ENCODE measurements at regions of chr2 and their contacts with region 1.

Region 1: DNA sequence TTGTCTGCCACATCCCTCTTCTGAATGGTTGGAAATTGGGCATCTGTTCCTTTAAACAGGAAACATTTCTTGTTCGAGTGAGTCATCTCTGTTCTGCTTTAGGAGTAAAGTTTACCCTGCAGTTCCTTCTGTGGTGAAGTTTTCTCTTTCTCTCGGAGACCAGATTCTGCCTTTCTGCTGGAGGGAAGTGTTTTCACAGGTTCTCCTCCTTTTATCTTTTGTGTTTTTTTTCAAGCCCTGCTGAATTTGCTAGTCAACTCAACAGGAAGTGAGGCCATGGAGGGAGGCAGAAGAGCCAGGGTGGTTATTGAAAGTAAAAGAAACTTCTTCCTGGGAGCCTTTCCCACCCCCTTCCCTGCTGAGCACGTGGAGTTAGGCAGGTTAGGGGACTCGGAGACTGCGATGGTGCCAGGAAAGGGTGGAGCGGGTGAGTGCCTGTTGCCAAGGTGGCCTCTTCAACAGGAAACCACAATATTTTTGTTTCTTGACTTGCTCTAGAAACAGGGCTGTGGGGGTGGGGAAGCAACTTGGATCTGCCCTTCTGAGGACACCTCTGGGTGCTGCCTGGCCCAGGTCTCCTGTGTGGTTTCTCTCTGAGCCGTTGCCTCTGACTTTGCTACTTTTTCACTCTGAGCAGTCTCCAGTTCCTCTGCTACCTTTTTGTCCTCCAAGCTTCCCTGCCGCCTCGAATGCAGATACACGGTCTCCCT is 2.2 kb upstream of the CASP8 start:
- DNase-seq: peak; percentile 94
- ATAC-seq: peak; percentile 67
- H3K4me3 ChIP-seq: peak overlapping the region; percentile 39 to 90 (median 58)
- H3K4me3 Mint-ChIP-seq: peak overlapping the region; percentile 87
- H3K27ac ChIP-seq: peak overlapping the region; percentile 97 to 98
- H3K27ac Mint-ChIP-seq: peak overlapping the region; percentile 99
- H3K4me1 ChIP-seq: peaks cover 58 to 84% of the 10 kb centered on the region in 2 donors
- H3K4me1 Mint-ChIP-seq: peaks cover 73% of the 10 kb centered on the region
- H3K27me3 ChIP-seq: no peaks in the 10 kb centered on the region
- H3K27me3 Mint-ChIP-seq: no peaks in the 10 kb centered on the region
- CTCF ChIP-seq: no peak

Region 2: DNA sequence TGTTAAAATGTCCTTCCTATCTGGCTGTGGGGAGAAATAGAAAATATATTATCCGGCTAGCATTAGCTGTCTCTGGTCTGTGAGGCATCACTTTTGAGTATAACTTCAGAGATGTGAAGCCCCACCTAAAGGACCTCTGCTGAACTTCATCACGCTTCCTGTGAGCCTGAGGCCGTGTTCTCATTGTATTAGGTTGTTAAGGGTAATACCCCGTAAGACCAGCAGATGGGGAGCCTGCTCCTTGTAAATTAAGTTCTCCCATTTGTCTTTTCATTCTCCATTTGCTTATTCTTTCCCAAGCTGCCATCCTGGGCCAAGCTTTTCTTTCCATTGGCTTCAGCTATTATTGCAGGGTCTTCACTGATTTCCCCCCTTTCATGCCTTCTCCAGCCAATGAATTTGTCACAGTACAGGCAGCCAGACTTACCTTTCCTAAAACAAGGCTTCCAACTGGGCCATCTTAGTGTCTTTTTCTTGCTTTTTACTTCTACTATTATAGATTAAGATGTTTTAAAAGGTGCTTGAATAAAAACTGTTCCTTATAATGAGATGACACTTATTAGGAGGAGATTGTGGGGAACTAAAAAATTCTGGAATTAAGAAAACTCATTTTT is 356.5 kb before region 1 on chr2:
- CTCF ChIA-PET with region 1: no interaction called
- POLR2A ChIA-PET with region 1: no interaction called
- intact Hi-C with region 1: loop called (anchors 1 kb)
- DNase-seq: peak; percentile 86
- ATAC-seq: peak; percentile 100
- H3K4me3 ChIP-seq: no peak overlapping the region
- H3K4me3 Mint-ChIP-seq: no peak overlapping the region
- H3K27ac ChIP-seq: peak overlapping the region in 1 of 2 donors; percentile 40
- H3K27ac Mint-ChIP-seq: no peak overlapping the region
- H3K4me1 ChIP-seq: no peaks in the 10 kb centered on the region
- H3K4me1 Mint-ChIP-seq: peaks cover 4% of the 10 kb centered on the region
- H3K27me3 ChIP-seq: no peaks in the 10 kb centered on the region
- H3K27me3 Mint-ChIP-seq: no peaks in the 10 kb centered on the region
- CTCF ChIP-seq: peak; percentile 94

Region 3: DNA sequence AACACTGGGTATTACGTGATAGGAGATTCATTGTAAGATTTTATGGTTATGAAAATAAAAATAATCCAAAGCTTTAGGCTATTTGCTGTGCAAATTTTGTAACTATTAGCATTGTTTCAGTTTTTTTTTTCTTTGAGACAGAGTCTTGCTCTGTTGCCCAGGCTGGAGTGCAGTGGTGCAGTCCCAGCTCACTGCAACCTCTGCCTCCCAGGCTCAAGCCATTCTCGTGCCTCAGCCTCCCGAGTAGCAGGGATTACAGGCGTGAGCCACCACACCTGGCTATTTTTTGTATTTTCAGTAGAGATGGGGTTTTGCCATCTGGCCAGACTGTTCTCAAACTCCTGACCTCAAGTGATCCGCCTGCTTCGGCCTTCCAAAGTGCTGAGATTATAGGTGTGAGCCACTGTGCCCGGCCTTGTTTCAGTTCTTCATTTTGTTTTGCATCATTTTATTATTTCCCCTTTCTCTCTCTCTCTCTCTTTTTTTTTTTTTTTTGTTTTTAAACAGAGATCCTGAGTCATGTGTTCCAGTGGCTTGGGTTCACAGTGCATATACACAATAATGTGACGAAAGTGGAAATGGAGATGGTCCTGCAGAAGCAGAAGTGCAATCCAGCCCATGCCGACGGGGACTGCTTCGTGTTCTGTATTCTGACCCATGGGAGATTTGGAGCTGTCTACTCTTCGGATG is 49.4 kb before region 1 on chr2:
- CTCF ChIA-PET with region 1: no interaction called
- POLR2A ChIA-PET with region 1: interaction called, 5 read pairs
- intact Hi-C with region 1: loop called (anchors 2 kb)
- DNase-seq: peak; percentile 90
- ATAC-seq: peak; percentile 85
- H3K4me3 ChIP-seq: peak overlapping the region in 3 of 5 experiments; percentile 8 to 40 (median 31)
- H3K4me3 Mint-ChIP-seq: peak overlapping the region; percentile 68
- H3K27ac ChIP-seq: peak overlapping the region; percentile 60 to 76
- H3K27ac Mint-ChIP-seq: peak overlapping the region; percentile 94
- H3K4me1 ChIP-seq: peaks cover 34 to 42% of the 10 kb centered on the region in 2 donors
- H3K4me1 Mint-ChIP-seq: peaks cover 58% of the 10 kb centered on the region
- H3K27me3 ChIP-seq: no peaks in the 10 kb centered on the region
- H3K27me3 Mint-ChIP-seq: no peaks in the 10 kb centered on the region
- CTCF ChIP-seq: no peak

Region 4: GRCh38 chr2:201242571-201243277 is 15.4 kb before region 1 on chr2:
- CTCF ChIA-PET with region 1: interaction called, 65 read pairs
- POLR2A ChIA-PET with region 1: interaction called, 6 read pairs
- intact Hi-C with region 1: loop called (anchors 1 kb)
- DNase-seq: no peak
- ATAC-seq: no peak
- H3K4me3 ChIP-seq: peak overlapping the region in 1 of 5 experiments; percentile 33
- H3K4me3 Mint-ChIP-seq: peak overlapping the region; percentile 14
- H3K27ac ChIP-seq: peak overlapping the region; percentile 27 to 42
- H3K27ac Mint-ChIP-seq: peak overlapping the region; percentile 46
- H3K4me1 ChIP-seq: peaks cover 47 to 48% of the 10 kb centered on the region in 2 donors
- H3K4me1 Mint-ChIP-seq: peaks cover 74% of the 10 kb centered on the region
- H3K27me3 ChIP-seq: no peaks in the 10 kb centered on the region
- H3K27me3 Mint-ChIP-seq: no peaks in the 10 kb centered on the region
- CTCF ChIP-seq: no peak

Region 5: GRCh38 chr2:201275990-201276389 is 17.9 kb after region 1 on chr2:
- CTCF ChIA-PET with region 1: interaction called, 9 read pairs
- POLR2A ChIA-PET with region 1: no interaction called
- intact Hi-C with region 1: loop called (anchors 2 kb)
- DNase-seq: no peak
- ATAC-seq: no peak
- H3K4me3 ChIP-seq: no peak overlapping the region
- H3K4me3 Mint-ChIP-seq: no peak overlapping the region
- H3K27ac ChIP-seq: no peak overlapping the region
- H3K27ac Mint-ChIP-seq: peak overlapping the region; percentile 53
- H3K4me1 ChIP-seq: peaks cover 10 to 18% of the 10 kb centered on the region in 2 donors
- H3K4me1 Mint-ChIP-seq: peaks cover 27% of the 10 kb centered on the region
- H3K27me3 ChIP-seq: no peaks in the 10 kb centered on the region
- H3K27me3 Mint-ChIP-seq: no peaks in the 10 kb centered on the region
- CTCF ChIP-seq: no peak

Region 6: DNA sequence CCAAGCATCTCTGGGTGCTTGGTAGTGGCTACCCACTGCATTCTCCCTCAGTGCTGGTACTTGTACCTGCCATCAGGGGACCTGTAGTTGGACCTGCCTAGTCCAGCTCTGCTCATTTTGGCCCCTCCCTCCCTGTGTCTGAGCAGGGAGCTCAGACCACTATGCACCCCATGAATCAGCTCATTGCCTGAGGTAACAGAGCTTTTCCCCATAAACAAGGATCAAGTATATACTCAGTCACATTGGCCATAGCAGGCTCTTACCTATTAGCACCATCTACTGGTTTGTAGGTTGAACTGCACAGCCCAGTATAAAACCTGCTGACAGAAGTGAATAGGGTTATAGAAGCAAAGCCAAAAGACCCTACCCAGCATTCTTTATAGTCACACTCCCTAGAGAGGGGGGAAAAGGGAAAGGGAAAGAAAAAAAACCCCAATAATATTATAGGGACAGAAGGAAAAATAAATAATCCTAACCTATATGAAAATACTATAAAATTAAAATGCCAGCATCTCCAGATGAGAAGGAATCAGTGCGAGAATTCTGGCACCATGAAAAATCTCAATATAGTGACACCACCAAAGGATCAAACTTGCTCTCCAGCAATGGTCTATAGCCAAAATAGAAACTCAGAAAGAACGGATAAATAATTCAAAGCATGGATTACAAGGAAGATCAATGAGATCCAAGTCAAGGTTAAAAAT is 105.9 kb after region 1 on chr2:
- CTCF ChIA-PET with region 1: interaction called, 6 read pairs
- POLR2A ChIA-PET with region 1: no interaction called
- intact Hi-C with region 1: loop called (anchors 1 kb)
- DNase-seq: peak; percentile 69
- ATAC-seq: peak; percentile 97
- H3K4me3 ChIP-seq: no peak overlapping the region
- H3K4me3 Mint-ChIP-seq: no peak overlapping the region
- H3K27ac ChIP-seq: no peak overlapping the region
- H3K27ac Mint-ChIP-seq: no peak overlapping the region
- H3K4me1 ChIP-seq: peaks cover 0 to 3% of the 10 kb centered on the region in 2 donors
- H3K4me1 Mint-ChIP-seq: peaks cover 4% of the 10 kb centered on the region
- H3K27me3 ChIP-seq: no peaks in the 10 kb centered on the region
- H3K27me3 Mint-ChIP-seq: no peaks in the 10 kb centered on the region
- CTCF ChIP-seq: peak; percentile 92

Region 7: GRCh38 chr2:201642579-201643215 is 384.6 kb after region 1 on chr2:
- CTCF ChIA-PET with region 1: no interaction called
- POLR2A ChIA-PET with region 1: no interaction called
- intact Hi-C with region 1: loop called (anchors 5 kb)
- DNase-seq: peak; percentile 92
- ATAC-seq: peak; percentile 86
- H3K4me3 ChIP-seq: peak overlapping the region; percentile 73 to 100 (median 95)
- H3K4me3 Mint-ChIP-seq: peak overlapping the region; percentile 96
- H3K27ac ChIP-seq: peak overlapping the region; percentile 89 to 93
- H3K27ac Mint-ChIP-seq: peak overlapping the region; percentile 97
- H3K4me1 ChIP-seq: peaks cover 10 to 14% of the 10 kb centered on the region in 2 donors
- H3K4me1 Mint-ChIP-seq: peaks cover 12% of the 10 kb centered on the region
- H3K27me3 ChIP-seq: peaks cover 0 to 2% (median 0%) of the 10 kb centered on the region in 4 experiments
- H3K27me3 Mint-ChIP-seq: peaks cover 7% of the 10 kb centered on the region
- CTCF ChIP-seq: no peak

Region 8: GRCh38 chr2:202096736-202097135 is 838.6 kb after region 1 on chr2:
- CTCF ChIA-PET with region 1: no interaction called
- POLR2A ChIA-PET with region 1: no interaction called
- intact Hi-C with region 1: no loop called
- DNase-seq: no peak
- ATAC-seq: no peak
- H3K4me3 ChIP-seq: no peak overlapping the region
- H3K4me3 Mint-ChIP-seq: no peak overlapping the region
- H3K27ac ChIP-seq: no peak overlapping the region
- H3K27ac Mint-ChIP-seq: no peak overlapping the region
- H3K4me1 ChIP-seq: peaks cover 4 to 11% of the 10 kb centered on the region in 2 donors
- H3K4me1 Mint-ChIP-seq: peaks cover 9% of the 10 kb centered on the region
- H3K27me3 ChIP-seq: no peaks in the 10 kb centered on the region
- H3K27me3 Mint-ChIP-seq: peaks cover 19% of the 10 kb centered on the region
- CTCF ChIP-seq: no peak

Measured in B cell (primary cell).